Head of caudate nucleus (tissue), 42 donors: ENCODE measurements at regions of chr1 and their contacts with region 1.

Region 1: GRCh38 chr1:46616277-46617107 is at the start of gene MOB3C:
- DNase-seq: peak; percentile 53 to 89 (median 78)

Region 2: GRCh38 chr1:46653405-46653958 is 37.0 kb after region 1 on chr1:
- intact Hi-C with region 1: no loop called
- DNase-seq: no peak

Region 3: DNA sequence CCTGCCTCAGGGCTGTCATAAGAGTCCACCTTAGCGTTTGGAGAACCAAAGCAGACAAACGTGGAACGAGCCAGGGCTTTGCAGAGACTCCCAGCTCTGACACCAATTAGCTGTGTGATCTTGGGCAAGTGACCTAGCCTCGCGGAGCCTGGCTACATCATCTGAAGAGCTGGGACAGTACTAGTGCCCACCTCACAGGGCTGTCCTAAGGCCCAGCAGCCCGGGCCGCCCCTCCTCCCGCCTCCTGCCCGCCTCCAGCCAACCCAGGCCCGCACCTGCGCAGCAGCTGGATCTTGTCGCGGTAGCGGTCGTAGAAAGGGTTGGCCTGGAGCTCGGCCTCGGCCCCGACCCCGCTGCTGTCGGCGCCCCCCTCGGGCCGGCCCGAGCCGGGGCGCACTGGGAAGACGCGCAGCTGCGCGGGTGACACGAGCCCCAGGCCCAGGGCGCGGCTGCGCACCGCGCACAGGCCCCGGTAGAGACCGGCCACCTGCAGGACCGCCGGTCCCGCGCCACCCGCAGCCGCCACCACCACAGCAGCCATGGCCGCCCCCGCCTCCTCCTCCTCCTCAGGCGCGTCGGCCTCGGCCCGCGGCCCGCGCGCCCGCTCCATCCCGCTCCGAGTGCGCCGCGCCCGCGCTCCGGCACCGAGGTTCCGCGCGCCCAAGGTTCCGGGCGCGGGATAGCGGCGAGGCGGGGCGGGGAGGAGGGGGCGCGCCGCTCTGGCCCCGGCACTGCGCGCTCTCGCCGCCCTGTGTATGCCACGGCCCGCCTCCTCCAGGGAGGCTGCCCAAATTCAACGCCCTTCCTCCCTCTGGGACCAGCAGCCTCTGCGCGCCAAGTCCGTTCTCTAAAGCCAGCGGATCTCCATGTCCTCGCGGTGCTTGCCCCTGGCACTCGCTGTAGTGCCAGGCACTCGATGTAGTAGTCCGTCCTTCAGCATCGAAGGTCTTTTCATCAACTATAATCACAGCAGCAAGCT is 51.6 kb after region 1 on chr1 and contains the start of gene ATPAF1:
- intact Hi-C with region 1: loop called (anchors 10 kb)
- DNase-seq: peak; percentile 36 to 87 (median 76)